PC-9 (cell line): ENCODE measurements at regions of chr17 and their contacts with region 1.

Region 1: DNA sequence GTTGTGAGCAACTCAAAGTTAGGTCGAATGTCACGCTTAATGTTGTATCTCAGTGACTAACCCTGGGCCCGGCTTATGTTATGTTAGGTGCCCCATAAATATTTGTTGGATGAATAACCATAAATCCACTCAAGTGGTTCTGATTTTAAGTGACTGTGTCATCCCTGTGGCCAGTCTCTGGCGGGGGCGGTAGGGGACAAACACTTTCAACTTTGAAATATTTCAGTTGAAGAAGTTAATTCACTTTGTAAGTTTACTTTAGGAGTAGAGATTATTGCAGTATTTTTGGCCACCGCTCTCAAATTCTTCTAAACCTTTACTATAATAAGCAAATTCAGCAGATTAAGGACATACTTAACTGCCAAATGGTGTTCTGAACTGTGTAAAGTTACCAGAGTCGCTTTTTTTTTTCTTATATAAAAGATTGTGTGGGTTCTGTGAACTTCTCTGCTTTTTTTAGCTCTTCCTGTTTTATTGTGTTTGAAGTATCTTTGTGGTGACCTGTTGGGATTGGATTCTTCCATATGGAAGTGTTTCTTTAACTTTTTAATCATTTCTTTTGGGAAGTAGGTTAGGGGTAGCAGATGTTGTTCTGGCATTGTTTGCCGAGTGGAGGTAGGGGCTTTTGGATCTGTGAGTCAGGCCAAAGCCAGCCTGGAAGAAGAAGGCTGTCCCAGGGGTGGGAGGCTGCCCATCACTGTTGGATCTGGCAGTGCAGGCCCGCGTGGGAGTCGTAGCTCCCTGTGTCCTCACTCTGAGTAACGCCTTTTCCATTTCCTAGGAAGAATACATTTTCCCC is 61.4 kb upstream of the TBX2 start:
- DNase-seq: peak; percentile 4 to 85
- H3K4me3 ChIP-seq: no peak overlapping the region
- H3K27ac ChIP-seq: peak overlapping the region; percentile 74
- H3K4me1 ChIP-seq: peaks cover 24% of the 10 kb centered on the region
- H3K27me3 ChIP-seq: no peaks in the 10 kb centered on the region
- CTCF ChIP-seq: no peak

Region 2: DNA sequence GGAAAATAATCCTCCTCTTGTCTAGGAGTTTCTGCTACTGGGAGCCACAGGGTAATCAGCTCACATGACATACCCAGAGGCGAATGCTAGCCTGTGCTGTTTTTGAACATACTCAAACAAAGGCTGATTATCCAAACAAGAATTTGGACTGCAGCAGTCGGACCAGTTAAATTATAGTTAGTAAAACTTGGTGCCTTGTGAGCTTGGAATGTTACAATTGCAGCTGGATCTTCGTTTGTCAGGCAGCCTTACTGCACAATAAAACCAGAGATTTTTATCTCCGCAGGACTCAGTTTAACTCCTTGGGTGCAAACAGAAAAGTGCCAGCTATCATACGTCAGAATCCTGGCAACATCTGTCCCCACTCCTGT is 102.4 kb before region 1 on chr17:
- CTCF ChIA-PET with region 1: no interaction called
- POLR2A ChIA-PET with region 1: no interaction called
- intact Hi-C with region 1: no loop called
- DNase-seq: no peak
- H3K4me3 ChIP-seq: no peak overlapping the region
- H3K27ac ChIP-seq: no peak overlapping the region
- H3K4me1 ChIP-seq: 0 out of 2 replicates have a peak, but pooled peaks cover 6% of the 10 kb centered on the region
- H3K27me3 ChIP-seq: no peaks in the 10 kb centered on the region
- CTCF ChIP-seq: no peak

Region 3: DNA sequence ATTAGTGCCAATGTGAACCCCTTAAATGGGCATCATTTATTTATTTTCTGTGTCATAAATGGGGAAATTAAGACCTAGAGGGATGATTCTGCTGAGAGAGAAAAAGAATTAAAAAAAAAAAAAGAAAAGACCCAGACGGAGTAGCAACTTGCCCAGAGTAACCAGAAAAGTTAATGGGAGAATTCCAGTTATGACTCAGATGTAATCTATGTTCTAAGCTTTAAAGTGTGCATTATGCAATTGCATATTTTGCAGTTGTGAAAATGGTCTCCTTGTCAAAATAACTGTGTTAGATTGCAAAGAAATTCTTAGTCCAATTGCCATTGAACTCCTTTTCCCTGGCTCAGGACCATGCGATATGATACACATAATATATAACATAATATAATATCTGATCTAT is 22.9 kb after region 1 on chr17:
- CTCF ChIA-PET with region 1: no interaction called
- POLR2A ChIA-PET with region 1: no interaction called
- intact Hi-C with region 1: no loop called
- DNase-seq: peak in 1 of 2 experiments; percentile 83
- H3K4me3 ChIP-seq: no peak overlapping the region
- H3K27ac ChIP-seq: no peak overlapping the region
- H3K4me1 ChIP-seq: peaks cover 45% of the 10 kb centered on the region
- H3K27me3 ChIP-seq: no peaks in the 10 kb centered on the region
- CTCF ChIP-seq: no peak

Region 4: DNA sequence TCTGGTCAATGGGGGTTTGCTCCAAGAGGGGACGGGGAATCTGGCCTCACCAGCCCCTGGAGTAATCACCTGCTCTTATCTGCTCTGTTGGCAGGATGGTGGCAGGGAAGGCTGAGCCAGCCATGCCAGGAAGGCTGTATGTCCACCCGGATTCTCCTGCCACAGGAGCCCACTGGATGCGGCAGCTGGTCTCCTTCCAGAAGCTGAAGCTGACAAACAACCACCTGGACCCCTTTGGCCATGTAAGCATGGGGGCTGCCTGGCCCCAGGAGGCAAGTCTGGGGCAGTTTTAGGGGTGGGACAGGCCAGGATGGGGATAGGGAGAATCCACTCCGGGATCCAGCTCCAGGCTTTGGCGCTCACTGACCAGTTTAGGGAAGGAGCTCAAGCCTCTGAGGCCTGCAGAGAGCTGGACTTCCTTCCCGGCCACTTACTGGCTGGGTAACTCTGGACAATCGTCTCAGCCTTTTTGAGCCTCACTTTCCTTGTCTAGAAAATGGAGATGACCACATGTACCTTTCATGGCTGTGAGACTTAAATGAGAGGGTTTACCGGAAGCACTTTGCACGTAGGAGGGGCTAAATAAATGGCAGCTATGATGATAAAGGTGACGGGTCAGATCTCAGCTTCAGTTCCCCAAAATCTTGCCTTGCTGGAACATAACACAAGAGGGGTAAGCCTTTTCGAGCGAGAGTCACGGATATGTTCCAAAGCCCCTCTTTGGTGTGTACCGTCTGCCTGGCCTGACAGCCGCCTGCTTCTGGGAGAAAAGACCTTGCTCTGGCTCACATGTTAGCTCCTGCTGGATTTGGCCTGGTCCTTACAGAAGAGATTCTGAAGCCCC is 129.4 kb after region 1 on chr17:
- CTCF ChIA-PET with region 1: no interaction called
- POLR2A ChIA-PET with region 1: no interaction called
- intact Hi-C with region 1: no loop called
- DNase-seq: peak; percentile 32 to 45
- H3K4me3 ChIP-seq: no peak overlapping the region
- H3K27ac ChIP-seq: no peak overlapping the region
- H3K4me1 ChIP-seq: no peaks in the 10 kb centered on the region
- H3K27me3 ChIP-seq: no peaks in the 10 kb centered on the region
- CTCF ChIP-seq: no peak

Region 5: DNA sequence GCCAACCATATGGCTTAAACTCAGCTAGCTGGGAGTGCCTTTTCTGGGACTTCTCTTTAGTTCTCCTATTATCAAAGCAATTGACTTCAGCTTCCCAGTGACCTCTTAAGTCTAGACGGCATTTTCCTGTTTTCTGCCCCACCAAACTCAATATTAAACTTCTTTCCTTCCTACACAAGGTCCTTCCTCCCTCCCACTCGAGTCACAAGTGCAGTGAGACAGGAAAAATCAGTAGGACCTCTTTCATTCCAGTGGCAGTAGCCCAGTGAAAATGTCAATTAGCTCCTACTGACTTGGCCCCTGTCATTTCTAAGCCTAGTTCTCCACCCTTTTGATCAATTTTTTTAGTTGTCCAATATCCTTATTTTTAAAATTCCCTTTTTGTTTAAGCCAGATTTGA is 262.4 kb after region 1 on chr17:
- CTCF ChIA-PET with region 1: no interaction called
- POLR2A ChIA-PET with region 1: interaction called, 13 read pairs
- intact Hi-C with region 1: no loop called
- DNase-seq: no peak
- H3K4me3 ChIP-seq: no peak overlapping the region
- H3K27ac ChIP-seq: no peak overlapping the region
- H3K4me1 ChIP-seq: no peaks in the 10 kb centered on the region
- H3K27me3 ChIP-seq: no peaks in the 10 kb centered on the region
- CTCF ChIP-seq: no peak